GM10248 (cell line): ENCODE measurements at regions of chr7 and their contacts with region 1.

Region 1: GRCh38 chr7:106176414-106177299 is 64.5 kb upstream of the SYPL1 start:
- DNase-seq: peak; percentile 77
- CTCF ChIP-seq: peak; percentile 98

Region 2: DNA sequence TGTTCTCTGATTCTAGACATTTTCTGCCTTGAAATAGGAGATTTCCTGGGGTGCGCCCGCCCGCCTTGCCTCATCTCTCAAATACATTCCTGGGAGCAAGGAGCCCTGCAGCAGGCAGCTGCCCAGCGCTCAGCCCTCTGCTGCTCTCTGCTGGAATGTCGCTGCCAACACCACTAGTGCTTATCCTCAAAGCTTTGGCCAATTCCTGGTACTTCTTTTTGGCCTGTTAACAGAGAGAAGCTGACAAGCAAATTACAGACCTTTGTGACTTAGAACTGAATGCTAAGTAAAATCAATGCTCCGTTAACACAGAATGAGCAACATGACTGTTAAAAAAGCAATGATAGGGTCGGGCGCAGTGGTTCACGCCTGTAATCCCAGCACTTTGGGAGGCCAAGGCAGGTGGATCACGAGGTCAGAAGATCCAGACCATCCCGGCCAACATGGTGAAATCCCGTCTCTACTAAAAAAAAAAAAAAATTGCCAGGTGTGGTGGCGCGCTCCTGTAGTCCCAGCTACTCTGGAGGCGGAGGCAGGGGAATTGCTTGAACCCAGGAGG is 22.7 kb before region 1 on chr7:
- CTCF ChIA-PET with region 1: interaction called, 24 read pairs
- POLR2A ChIA-PET with region 1: no interaction called
- DNase-seq: peak; percentile 81
- CTCF ChIP-seq: peak; percentile 94

Region 3: GRCh38 chr7:106205621-106206222 is 29.1 kb after region 1 on chr7:
- CTCF ChIA-PET with region 1: interaction called, 10 read pairs
- POLR2A ChIA-PET with region 1: no interaction called
- DNase-seq: peak; percentile 39
- CTCF ChIP-seq: no peak

Region 4: DNA sequence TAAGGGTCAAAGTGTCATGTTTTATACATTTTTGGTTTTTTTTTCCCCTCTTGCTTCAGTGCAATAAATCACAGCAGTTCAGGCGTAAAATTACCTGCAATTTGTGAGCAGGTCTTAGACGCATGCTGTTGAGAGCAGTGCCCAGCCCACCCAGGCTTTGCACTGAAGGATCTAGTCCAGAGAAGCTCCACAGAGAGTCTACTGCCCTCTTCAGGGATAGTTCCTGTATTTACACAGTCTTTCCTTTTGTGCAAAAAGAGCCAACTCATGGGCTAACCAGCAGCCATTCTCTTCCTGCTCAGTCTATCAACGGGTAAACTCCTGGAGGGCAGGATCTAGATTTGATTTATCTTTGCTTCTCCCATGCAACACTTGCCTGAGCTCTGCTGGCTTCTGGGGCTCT is 190.4 kb after region 1 on chr7:
- CTCF ChIA-PET with region 1: interaction called, 12 read pairs
- POLR2A ChIA-PET with region 1: no interaction called
- DNase-seq: peak; percentile 29
- CTCF ChIP-seq: peak; percentile 15

Region 5: DNA sequence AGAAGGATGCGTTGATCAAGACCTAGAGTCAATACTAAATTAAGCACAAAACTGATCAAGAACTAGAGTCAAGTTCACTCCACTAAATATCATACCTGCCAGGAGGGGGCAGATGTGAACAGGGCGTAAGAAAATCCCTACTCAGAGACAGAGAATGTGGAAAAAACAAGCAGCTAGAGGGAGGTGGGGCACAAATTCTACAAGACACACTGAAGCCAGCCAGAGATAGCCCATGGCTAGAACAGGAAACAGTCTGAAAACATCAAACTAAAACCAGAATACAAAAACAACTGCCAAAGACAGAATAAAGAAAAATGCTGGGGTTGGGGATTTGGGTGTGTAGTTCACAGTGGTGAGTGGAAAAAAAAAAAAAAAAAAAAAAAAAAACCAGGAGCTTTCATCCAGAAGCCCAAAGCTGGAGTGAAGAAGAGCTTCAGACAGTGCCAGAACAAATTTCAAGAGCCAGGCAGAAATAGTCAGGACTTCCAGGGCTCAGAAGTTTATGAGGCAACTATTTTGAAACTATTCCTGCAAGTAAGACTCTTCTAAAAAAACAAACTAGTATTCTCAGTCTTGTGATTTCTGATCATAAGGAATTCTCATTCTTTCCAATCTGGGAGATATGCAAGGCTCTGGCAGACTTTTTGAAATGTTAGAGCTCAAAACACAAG is 366.0 kb after region 1 on chr7:
- CTCF ChIA-PET with region 1: interaction called, 17 read pairs
- POLR2A ChIA-PET with region 1: no interaction called
- DNase-seq: peak; percentile 64
- CTCF ChIP-seq: peak; percentile 41

Region 6: DNA sequence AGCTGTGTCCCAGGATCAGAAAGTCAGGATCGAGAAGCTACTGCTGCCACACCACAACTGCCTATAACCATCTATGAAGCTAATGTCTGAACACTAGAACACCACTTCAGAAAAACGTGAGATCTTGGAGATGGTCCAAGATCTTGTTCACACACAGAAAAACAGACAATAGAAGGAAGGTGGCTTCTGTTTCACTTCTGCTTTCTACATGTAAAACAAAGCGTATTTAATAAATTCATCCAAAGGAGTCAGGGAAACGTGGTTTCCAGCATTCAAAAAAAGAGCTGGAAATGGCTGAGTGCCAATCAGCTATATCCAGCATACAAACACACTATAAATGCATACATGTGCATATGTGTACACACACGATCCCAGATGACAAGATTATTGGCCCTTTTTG is 554.5 kb after region 1 on chr7:
- CTCF ChIA-PET with region 1: interaction called, 36 read pairs
- POLR2A ChIA-PET with region 1: no interaction called
- DNase-seq: peak; percentile 22
- CTCF ChIP-seq: no peak